ENCODE measurements at regions of chr22 and their contacts with region 1.

Region 1: GRCh38 chr22:17171313-17172171 is 12.5 kb upstream of the HDHD5 start:
- DNase-seq: peak; percentile 63 to 80 (median 67)
- H3K4me3 ChIP-seq: peak overlapping the region; percentile 51
- H3K4me3 Mint-ChIP-seq: peak overlapping the region; percentile 84 to 92 (median 86)
- H3K27ac ChIP-seq: peak overlapping the region; percentile 31
- H3K27ac Mint-ChIP-seq: peak overlapping the region in 7 of 8 donors; percentile 24 to 95 (median 72)
- H3K4me1 ChIP-seq: peaks cover 5% of the 10 kb centered on the region
- H3K4me1 Mint-ChIP-seq: peaks cover 5 to 11% (median 7%) of the 10 kb centered on the region in 3 donors
- H3K27me3 ChIP-seq: no peaks in the 10 kb centered on the region
- H3K27me3 Mint-ChIP-seq: peaks cover 0 to 2% of the 10 kb centered on the region in 2 donors

Region 2: GRCh38 chr22:17077255-17077654 is 94.3 kb before region 1 on chr22:
- CTCF ChIA-PET with region 1: interaction called, 82 read pairs
- POLR2A ChIA-PET with region 1: no interaction called
- DNase-seq: no peak
- H3K4me3 ChIP-seq: no peak overlapping the region
- H3K4me3 Mint-ChIP-seq: no peak overlapping the region
- H3K27ac ChIP-seq: no peak overlapping the region
- H3K27ac Mint-ChIP-seq: no peak overlapping the region
- H3K4me1 ChIP-seq: peaks cover 7% of the 10 kb centered on the region
- H3K4me1 Mint-ChIP-seq: peaks cover 6 to 12% (median 12%) of the 10 kb centered on the region in 3 donors
- H3K27me3 ChIP-seq: no peaks in the 10 kb centered on the region
- H3K27me3 Mint-ChIP-seq: peaks cover 0 to 4% of the 10 kb centered on the region in 2 donors

Region 3: GRCh38 chr22:17115945-17116565 is 55.5 kb before region 1 on chr22:
- CTCF ChIA-PET with region 1: interaction called, 26 read pairs
- POLR2A ChIA-PET with region 1: no interaction called
- DNase-seq: peak in 1 of 5 donors; percentile 32
- H3K4me3 ChIP-seq: peak overlapping the region; percentile 23
- H3K4me3 Mint-ChIP-seq: peak overlapping the region; percentile 15 to 76 (median 72)
- H3K27ac ChIP-seq: no peak overlapping the region
- H3K27ac Mint-ChIP-seq: peak overlapping the region; percentile 36 to 93 (median 78)
- H3K4me1 ChIP-seq: peaks cover 56% of the 10 kb centered on the region
- H3K4me1 Mint-ChIP-seq: peaks cover 51 to 71% (median 63%) of the 10 kb centered on the region in 3 donors
- H3K27me3 ChIP-seq: no peaks in the 10 kb centered on the region
- H3K27me3 Mint-ChIP-seq: peaks cover 0 to 5% of the 10 kb centered on the region in 2 donors

Region 4: GRCh38 chr22:17188237-17188636 is 16.7 kb after region 1 on chr22:
- CTCF ChIA-PET with region 1: interaction called, 22 read pairs
- POLR2A ChIA-PET with region 1: no interaction called
- DNase-seq: no peak
- H3K4me3 ChIP-seq: no peak overlapping the region
- H3K4me3 Mint-ChIP-seq: no peak overlapping the region
- H3K27ac ChIP-seq: no peak overlapping the region
- H3K27ac Mint-ChIP-seq: peak overlapping the region in 1 of 8 donors; percentile 31
- H3K4me1 ChIP-seq: no peaks in the 10 kb centered on the region
- H3K4me1 Mint-ChIP-seq: peaks cover 0 to 1% (median 0%) of the 10 kb centered on the region in 3 donors
- H3K27me3 ChIP-seq: no peaks in the 10 kb centered on the region
- H3K27me3 Mint-ChIP-seq: no peaks in the 10 kb centered on the region

Region 5: GRCh38 chr22:17213976-17214375 is 42.4 kb after region 1 on chr22:
- CTCF ChIA-PET with region 1: interaction called, 17 read pairs
- POLR2A ChIA-PET with region 1: no interaction called
- DNase-seq: peak in 3 of 5 donors; percentile 25 to 59 (median 46)
- H3K4me3 ChIP-seq: no peak overlapping the region
- H3K4me3 Mint-ChIP-seq: peak overlapping the region in 2 of 7 donors; percentile 7 to 19
- H3K27ac ChIP-seq: no peak overlapping the region
- H3K27ac Mint-ChIP-seq: peak overlapping the region in 6 of 8 donors; percentile 22 to 94 (median 62)
- H3K4me1 ChIP-seq: peaks cover 38% of the 10 kb centered on the region
- H3K4me1 Mint-ChIP-seq: peaks cover 45 to 63% (median 58%) of the 10 kb centered on the region in 3 donors
- H3K27me3 ChIP-seq: no peaks in the 10 kb centered on the region
- H3K27me3 Mint-ChIP-seq: no peaks in the 10 kb centered on the region

Region 6: GRCh38 chr22:17348461-17349113 is 177.0 kb after region 1 on chr22:
- CTCF ChIA-PET with region 1: no interaction called
- POLR2A ChIA-PET with region 1: no interaction called
- DNase-seq: no peak
- H3K4me3 ChIP-seq: no peak overlapping the region
- H3K4me3 Mint-ChIP-seq: no peak overlapping the region
- H3K27ac ChIP-seq: no peak overlapping the region
- H3K27ac Mint-ChIP-seq: no peak overlapping the region
- H3K4me1 ChIP-seq: no peaks in the 10 kb centered on the region
- H3K4me1 Mint-ChIP-seq: peaks cover 0 to 5% (median 3%) of the 10 kb centered on the region in 3 donors
- H3K27me3 ChIP-seq: no peaks in the 10 kb centered on the region
- H3K27me3 Mint-ChIP-seq: peaks cover 14 to 15% of the 10 kb centered on the region in 2 donors

Measured in CD8-positive, alpha-beta memory T cell (primary cell).